Heart right ventricle (tissue), 16 donors: ENCODE measurements at regions of chr15 and their contacts with region 1.

Region 1: GRCh38 chr15:84658080-84658787 is at the start of gene NMB:
- DNase-seq: peak; percentile 70 to 80
- ATAC-seq: peak; percentile 59 to 73 (median 68)
- H3K4me3 ChIP-seq: peak within 1 kb of the TSS; percentile 37 to 75 (median 69)
- H3K27ac ChIP-seq: peak within 1 kb of the TSS; percentile 34 to 88 (median 76)
- H3K4me1 ChIP-seq: peaks cover 8 to 38% (median 24%) of the 10 kb centered on the region in 9 donors
- H3K27me3 ChIP-seq: no peaks in the 10 kb centered on the region
- CTCF ChIP-seq: peak; percentile 37 to 81 (median 56)
- total RNA-seq, gene NMB: 0.96 to 6.6 (median 2.1) TPM

Region 2: GRCh38 chr15:84588053-84588874 is 70.0 kb before region 1 on chr15:
- intact Hi-C with region 1: loop called in 2 of 10 experiments (anchors 5 to 10 kb)
- DNase-seq: peak; percentile 84 to 86
- ATAC-seq: peak; percentile 98 to 99 (median 98)
- H3K4me3 ChIP-seq: peak overlapping the region in 8 of 10 donors; percentile 14 to 61 (median 48)
- H3K27ac ChIP-seq: no peak overlapping the region
- H3K4me1 ChIP-seq: peaks cover 0 to 10% (median 4%) of the 10 kb centered on the region in 9 donors
- H3K27me3 ChIP-seq: no peaks in the 10 kb centered on the region
- CTCF ChIP-seq: peak; percentile 85 to 97 (median 94)

Region 3: GRCh38 chr15:84633311-84634227 is 24.7 kb before region 1 on chr15:
- intact Hi-C with region 1: loop called in 2 of 10 experiments (anchors 1 kb)
- DNase-seq: peak; percentile 62 to 78
- ATAC-seq: peak; percentile 53 to 81 (median 75)
- H3K4me3 ChIP-seq: peak overlapping the region; percentile 42 to 85 (median 72)
- H3K27ac ChIP-seq: peak overlapping the region; percentile 92 to 100 (median 98)
- H3K4me1 ChIP-seq: peaks cover 4 to 55% (median 45%) of the 10 kb centered on the region in 9 donors
- H3K27me3 ChIP-seq: no peaks in the 10 kb centered on the region
- CTCF ChIP-seq: no peak

Region 4: GRCh38 chr15:84716036-84716799 is 58.0 kb after region 1 on chr15 and contains the start of gene SEC11A:
- intact Hi-C with region 1: loop called in 2 of 10 experiments (anchors 10 kb)
- DNase-seq: peak; percentile 94 to 95
- ATAC-seq: peak; percentile 98 to 99 (median 98)
- H3K4me3 ChIP-seq: peak within 1 kb of the TSS; percentile 68 to 97 (median 88)
- H3K27ac ChIP-seq: peak within 1 kb of the TSS; percentile 89 to 98 (median 96)
- H3K4me1 ChIP-seq: peaks cover 5 to 53% (median 27%) of the 10 kb centered on the region in 9 donors
- H3K27me3 ChIP-seq: no peaks in the 10 kb centered on the region
- CTCF ChIP-seq: peak in 2 of 9 donors; percentile 6 to 8
- total RNA-seq, gene SEC11A: 65.9 to 93.8 (median 75.0) TPM

Region 5: DNA sequence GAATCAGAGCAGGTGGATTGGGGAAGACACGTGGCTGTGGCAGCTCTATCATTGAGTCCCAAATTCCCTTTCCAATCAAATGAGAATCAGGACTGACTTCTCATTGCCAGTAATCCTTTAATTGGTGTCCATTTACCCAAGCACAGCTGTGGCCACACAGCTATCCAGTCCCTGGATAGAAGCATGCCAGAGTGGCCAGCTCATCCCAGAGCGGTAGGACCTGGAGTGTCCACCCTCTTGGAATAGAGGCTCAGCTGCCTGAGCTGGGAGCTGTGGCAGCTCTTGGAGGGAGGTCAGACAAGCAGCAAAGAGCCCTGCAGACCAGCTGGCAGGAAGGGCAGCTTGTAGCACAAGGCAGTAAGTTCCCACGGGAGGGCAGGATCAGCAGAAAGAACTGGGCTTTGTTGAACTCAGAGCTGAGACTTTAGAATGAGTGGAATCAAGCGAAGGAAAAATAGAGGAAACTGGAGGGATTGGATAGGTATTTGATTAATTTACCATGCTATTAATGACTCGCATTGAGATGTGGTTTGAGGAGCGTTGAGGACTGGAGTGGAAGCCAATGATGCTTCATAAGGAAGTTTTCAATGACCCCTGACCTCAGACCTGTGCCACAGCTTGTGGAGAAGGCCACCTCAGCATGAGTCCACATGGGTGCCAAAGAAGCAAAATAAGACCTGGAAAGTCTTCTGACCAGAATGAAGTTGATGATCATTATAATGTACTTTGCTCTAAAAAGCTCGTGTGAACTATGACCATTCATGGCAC is 152.0 kb after region 1 on chr15:
- intact Hi-C with region 1: loop called in 4 of 10 experiments (anchors 5 to 10 kb)
- DNase-seq: no peak
- ATAC-seq: peak in 5 of 8 donors; percentile 41 to 71 (median 63)
- H3K4me3 ChIP-seq: no peak overlapping the region
- H3K27ac ChIP-seq: peak overlapping the region in 2 of 10 donors; percentile 0 to 35
- H3K4me1 ChIP-seq: peaks cover 0 to 17% (median 8%) of the 10 kb centered on the region in 9 donors
- H3K27me3 ChIP-seq: no peaks in the 10 kb centered on the region
- CTCF ChIP-seq: no peak

Region 6: DNA sequence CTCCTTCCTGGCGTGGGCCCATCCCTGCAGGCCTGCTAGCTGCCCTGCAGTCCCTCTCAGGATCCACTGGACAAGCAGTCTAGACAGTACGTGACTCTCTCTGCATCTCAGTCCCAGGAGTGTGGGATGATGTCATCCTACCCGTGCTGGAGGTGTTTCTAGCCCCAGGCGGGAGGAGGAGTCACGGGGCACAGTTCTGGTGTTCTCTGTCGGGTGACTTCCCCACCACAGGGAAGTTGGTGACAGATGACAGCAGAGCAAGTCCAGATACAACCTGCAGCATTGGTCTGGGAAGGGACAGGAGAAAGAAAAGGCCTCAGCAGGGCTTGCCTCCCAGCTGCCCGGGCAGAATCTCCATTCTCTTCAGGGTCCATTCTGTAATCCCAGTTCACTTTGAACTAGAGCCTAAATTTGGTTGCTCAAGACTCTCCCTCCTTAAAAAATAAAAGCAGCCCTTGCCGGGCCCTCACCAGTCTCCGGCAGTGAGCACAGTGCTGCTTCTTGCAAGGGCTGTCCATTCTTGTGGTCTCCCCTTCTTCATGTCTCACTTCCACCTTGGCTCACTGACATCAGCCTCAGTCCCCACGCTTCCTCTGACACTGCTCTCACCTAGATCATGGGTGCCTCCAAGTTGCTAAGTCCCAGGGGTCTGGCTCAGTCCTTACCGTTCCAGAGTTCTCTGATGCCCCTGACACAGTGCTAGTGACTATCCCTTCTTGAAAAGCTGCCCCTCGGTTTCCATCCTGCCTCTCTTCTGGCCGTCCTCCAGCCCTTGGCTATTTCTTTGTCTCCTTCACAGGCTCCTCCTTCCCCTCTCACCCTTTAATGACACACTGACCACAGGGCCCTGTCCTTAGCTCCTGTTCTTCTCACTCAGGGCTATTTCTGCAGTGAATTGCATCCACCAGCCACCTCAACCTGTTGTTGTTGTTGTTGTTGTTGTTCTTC is 257.1 kb after region 1 on chr15:
- intact Hi-C with region 1: loop called in 3 of 10 experiments (anchors 10 kb)
- DNase-seq: peak; percentile 75 to 90
- ATAC-seq: peak; percentile 53 to 88 (median 81)
- H3K4me3 ChIP-seq: no peak overlapping the region
- H3K27ac ChIP-seq: peak overlapping the region; percentile 77 to 91 (median 88)
- H3K4me1 ChIP-seq: peaks cover 32 to 68% (median 53%) of the 10 kb centered on the region in 9 donors
- H3K27me3 ChIP-seq: no peaks in the 10 kb centered on the region
- CTCF ChIP-seq: no peak